Motor neuron (in vitro differentiated cells): ENCODE measurements at regions of chr22 and their contacts with region 1.

Region 1: GRCh38 chr22:35582861-35583670 is 34.1 kb downstream of the MB start:
- ATAC-seq: peak; percentile 78 to 95 (median 89)
- H3K4me3 ChIP-seq: no peak overlapping the region
- H3K27ac ChIP-seq: no peak overlapping the region
- H3K4me1 ChIP-seq: peaks cover 0 to 5% of the 10 kb centered on the region in 2 donors

Region 2: DNA sequence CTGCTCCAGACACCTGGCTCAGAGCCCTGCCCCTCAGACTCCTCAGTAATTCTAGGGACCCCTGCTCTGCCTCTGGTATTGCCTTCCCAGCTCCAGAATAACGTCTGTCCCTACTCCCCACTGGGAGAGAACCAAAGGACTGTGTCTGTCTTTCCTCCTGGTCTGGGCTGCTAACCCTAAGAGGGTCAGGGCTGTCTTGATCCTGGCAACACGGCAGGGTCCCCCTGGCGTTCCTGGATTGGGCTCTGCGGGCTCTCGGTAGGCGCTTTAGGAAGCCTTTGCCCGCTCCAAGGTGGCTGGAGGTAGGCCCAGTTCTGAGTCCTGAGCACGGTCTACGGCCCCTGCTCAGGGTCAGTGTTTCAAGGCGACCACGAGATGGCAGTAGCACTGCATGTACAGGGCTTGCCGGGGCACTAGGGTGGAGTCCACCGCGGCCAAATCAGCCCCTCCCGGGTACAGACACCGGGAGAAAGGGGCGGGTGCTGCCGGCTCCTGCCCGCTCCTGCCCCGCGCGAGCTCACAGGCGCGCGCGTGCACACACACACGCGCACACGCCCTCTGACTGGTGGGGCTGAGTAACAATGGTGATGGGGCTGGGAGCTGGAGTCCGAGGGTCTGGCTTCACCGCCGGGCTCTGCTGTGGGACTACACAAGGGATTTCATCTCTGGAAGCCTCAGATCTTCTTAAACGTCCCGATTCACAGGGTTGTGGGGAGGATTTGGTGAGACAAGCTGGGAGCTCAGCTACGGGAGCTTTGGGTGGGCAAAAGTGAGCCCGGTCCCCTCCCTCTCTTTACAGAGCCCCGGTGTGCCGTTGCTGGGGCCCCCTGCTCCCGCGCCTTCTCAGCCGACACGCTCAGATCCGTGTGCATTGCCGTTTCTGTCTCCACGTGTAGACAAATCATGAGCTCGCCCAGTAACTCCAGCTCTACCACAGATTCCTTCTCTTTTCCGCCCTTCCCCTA is 232.2 kb before region 1 on chr22:
- in situ Hi-C with region 1: loop called in 1 of 9 experiments (anchors 10 kb)
- ATAC-seq: peak; percentile 83 to 94 (median 92)
- H3K4me3 ChIP-seq: peak overlapping the region; percentile 23 to 47 (median 31)
- H3K27ac ChIP-seq: peak overlapping the region; percentile 1 to 56
- H3K4me1 ChIP-seq: peaks cover 9 to 20% of the 10 kb centered on the region in 2 donors

Region 3: GRCh38 chr22:35430897-35431322 is 152.2 kb before region 1 on chr22:
- in situ Hi-C with region 1: loop called (anchors 5 to 25 kb)
- ATAC-seq: peak; percentile 86 to 98 (median 96)
- H3K4me3 ChIP-seq: no peak overlapping the region
- H3K27ac ChIP-seq: no peak overlapping the region
- H3K4me1 ChIP-seq: peaks cover 0 to 9% of the 10 kb centered on the region in 2 donors